Colonic mucosa (tissue), 4 donors: ENCODE measurements at regions of chr4 and their contacts with region 1.

Region 1: GRCh38 chr4:107044170-107044569 is 8.1 kb upstream of the DKK2 start:
- DNase-seq: no peak
- H3K4me3 ChIP-seq: no peak overlapping the region
- H3K27ac ChIP-seq: no peak overlapping the region
- H3K4me1 ChIP-seq: no peaks in the 10 kb centered on the region
- H3K27me3 ChIP-seq: no peaks in the 10 kb centered on the region
- CTCF ChIP-seq: no peak

Region 2: GRCh38 chr4:107519053-107519452 is 474.9 kb after region 1 on chr4:
- intact Hi-C with region 1: loop called (anchors 5 kb)
- DNase-seq: peak; percentile 19
- H3K4me3 ChIP-seq: no peak overlapping the region
- H3K27ac ChIP-seq: no peak overlapping the region
- H3K4me1 ChIP-seq: no peaks in the 10 kb centered on the region
- H3K27me3 ChIP-seq: no peaks in the 10 kb centered on the region
- CTCF ChIP-seq: peak; percentile 20

Region 3: DNA sequence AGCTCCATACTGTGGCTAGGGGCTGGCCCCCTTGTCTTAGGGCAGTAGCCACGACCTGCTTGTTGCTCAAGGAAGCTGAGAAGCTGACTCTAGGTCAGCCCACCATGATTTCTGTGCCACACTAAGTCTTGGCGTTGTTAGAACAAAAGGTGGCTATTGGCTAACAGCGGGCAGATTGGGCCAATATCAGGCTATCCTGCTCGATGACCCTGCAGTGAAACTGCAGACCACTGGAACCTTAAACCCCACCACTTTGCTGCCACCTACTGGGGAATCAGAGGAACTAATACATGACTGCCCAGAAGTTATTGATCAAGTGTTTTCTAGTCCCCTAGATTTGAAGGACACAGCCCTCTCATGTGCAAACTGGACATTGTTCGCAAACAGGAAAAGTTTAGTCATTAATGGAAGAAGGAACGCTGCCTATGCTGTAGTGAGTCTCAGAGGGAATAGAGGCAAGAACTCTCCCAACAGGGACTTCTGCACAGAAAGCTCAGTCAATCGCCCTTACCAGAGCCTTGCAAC is 692.8 kb after region 1 on chr4:
- intact Hi-C with region 1: loop called (anchors 10 kb)
- DNase-seq: peak; percentile 29
- H3K4me3 ChIP-seq: no peak overlapping the region
- H3K27ac ChIP-seq: no peak overlapping the region
- H3K4me1 ChIP-seq: no peaks in the 10 kb centered on the region
- H3K27me3 ChIP-seq: no peaks in the 10 kb centered on the region
- CTCF ChIP-seq: peak; percentile 87